H1 (cell line): ENCODE measurements at regions of chr10 and their contacts with region 1.

Region 1: GRCh38 chr10:127679642-127680255 is 57.2 kb upstream of the FOXI2 start:
- DNase-seq: no peak
- H3K4me3 ChIP-seq: no peak overlapping the region
- H3K27ac ChIP-seq: no peak overlapping the region
- H3K4me1 ChIP-seq: no peaks in the 10 kb centered on the region
- H3K27me3 ChIP-seq: no peaks in the 10 kb centered on the region
- CTCF ChIP-seq: peak; percentile 35 to 59 (median 44); a peak in 3 of 4 replicates
- EP300 ChIP-seq: no peak
- POLR2A ChIP-seq: no peak
- RAD21 ChIP-seq: peak; percentile 57 to 61

Region 2: GRCh38 chr10:127506094-127506493 is 173.7 kb before region 1 on chr10:
- CTCF ChIA-PET with region 1: no interaction called
- POLR2A ChIA-PET with region 1: no interaction called
- DNase-seq: no peak
- H3K4me3 ChIP-seq: no peak overlapping the region
- H3K27ac ChIP-seq: no peak overlapping the region
- H3K4me1 ChIP-seq: no peaks in the 10 kb centered on the region
- H3K27me3 ChIP-seq: no peaks in the 10 kb centered on the region
- CTCF ChIP-seq: no peak
- EP300 ChIP-seq: no peak
- POLR2A ChIP-seq: no peak
- RAD21 ChIP-seq: no peak

Region 3: GRCh38 chr10:127694580-127695193 is 14.9 kb after region 1 on chr10:
- CTCF ChIA-PET with region 1: interaction called, 42 read pairs
- POLR2A ChIA-PET with region 1: interaction called, 3 read pairs
- DNase-seq: peak; percentile 60 to 94
- H3K4me3 ChIP-seq: no peak overlapping the region
- H3K27ac ChIP-seq: no peak overlapping the region
- H3K4me1 ChIP-seq: peaks cover 0 to 2% (median 0%) of the 10 kb centered on the region in 4 experiments; a peak in 2 of 7 replicates
- H3K27me3 ChIP-seq: no peaks in the 10 kb centered on the region
- CTCF ChIP-seq: peak; percentile 84 to 98 (median 91)
- EP300 ChIP-seq: peak in 1 of 2 experiments; percentile 43; a peak in 1 of 3 replicates
- POLR2A ChIP-seq: no peak
- RAD21 ChIP-seq: peak; percentile 56 to 67

Region 4: GRCh38 chr10:127702271-127702670 is 22.5 kb after region 1 on chr10:
- CTCF ChIA-PET with region 1: interaction called, 38 read pairs
- POLR2A ChIA-PET with region 1: no interaction called
- DNase-seq: no peak
- H3K4me3 ChIP-seq: no peak overlapping the region
- H3K27ac ChIP-seq: no peak overlapping the region
- H3K4me1 ChIP-seq: no peaks in the 10 kb centered on the region
- H3K27me3 ChIP-seq: no peaks in the 10 kb centered on the region
- CTCF ChIP-seq: no peak
- EP300 ChIP-seq: no peak
- POLR2A ChIP-seq: no peak
- RAD21 ChIP-seq: no peak